CD4-positive, alpha-beta memory T cell (primary cell): ENCODE measurements at regions of chr12 and their contacts with region 1.

Region 1: GRCh38 chr12:122265931-122266771 is at the start of gene VPS33A:
- DNase-seq: peak; percentile 88 to 93 (median 91)
- H3K4me3 ChIP-seq: peak within 1 kb of the TSS; percentile 70 to 99
- H3K4me3 Mint-ChIP-seq: peak within 1 kb of the TSS; percentile 96 to 99 (median 98)
- H3K27ac ChIP-seq: peak within 1 kb of the TSS; percentile 81
- H3K27ac Mint-ChIP-seq: peak within 1 kb of the TSS; percentile 99 to 100 (median 99)
- H3K4me1 ChIP-seq: peaks cover 23% of the 10 kb centered on the region
- H3K4me1 Mint-ChIP-seq: peaks cover 14 to 39% (median 25%) of the 10 kb centered on the region in 4 donors
- H3K27me3 ChIP-seq: no peaks in the 10 kb centered on the region
- H3K27me3 Mint-ChIP-seq: peaks cover 0 to 4% of the 10 kb centered on the region in 2 donors
- total RNA-seq, gene VPS33A: 40.5 to 42.6 TPM

Region 2: GRCh38 chr12:122023339-122024091 is 242.6 kb before region 1 on chr12:
- CTCF ChIA-PET with region 1: no interaction called
- POLR2A ChIA-PET with region 1: no interaction called
- intact Hi-C with region 1: no loop called
- DNase-seq: no peak
- H3K4me3 ChIP-seq: peak overlapping the region in 1 of 2 donors; percentile 47
- H3K4me3 Mint-ChIP-seq: peak overlapping the region; percentile 74 to 84 (median 82)
- H3K27ac ChIP-seq: no peak overlapping the region
- H3K27ac Mint-ChIP-seq: peak overlapping the region in 3 of 7 donors; percentile 2 to 62 (median 13)
- H3K4me1 ChIP-seq: peaks cover 14% of the 10 kb centered on the region
- H3K4me1 Mint-ChIP-seq: peaks cover 5 to 14% (median 6%) of the 10 kb centered on the region in 4 donors
- H3K27me3 ChIP-seq: no peaks in the 10 kb centered on the region
- H3K27me3 Mint-ChIP-seq: peaks cover 5 to 7% of the 10 kb centered on the region in 2 donors

Region 3: GRCh38 chr12:122203301-122204166 is 62.6 kb before region 1 on chr12 and contains the start of gene B3GNT4:
- CTCF ChIA-PET with region 1: interaction called, 3 read pairs
- POLR2A ChIA-PET with region 1: no interaction called
- intact Hi-C with region 1: loop called (anchors 2 kb)
- DNase-seq: peak; percentile 68 to 74 (median 71)
- H3K4me3 ChIP-seq: peak within 1 kb of the TSS in 1 of 2 donors; percentile 55
- H3K4me3 Mint-ChIP-seq: peak within 1 kb of the TSS; percentile 80 to 94 (median 84)
- H3K27ac ChIP-seq: no peak within 1 kb of the TSS
- H3K27ac Mint-ChIP-seq: peak within 1 kb of the TSS in 5 of 7 donors; percentile 19 to 82 (median 24)
- H3K4me1 ChIP-seq: peaks cover 9% of the 10 kb centered on the region
- H3K4me1 Mint-ChIP-seq: peaks cover 5 to 20% (median 12%) of the 10 kb centered on the region in 4 donors
- H3K27me3 ChIP-seq: no peaks in the 10 kb centered on the region
- H3K27me3 Mint-ChIP-seq: peaks cover 0 to 8% of the 10 kb centered on the region in 2 donors
- total RNA-seq, gene B3GNT4: 0.93 to 1.4 TPM

Region 4: GRCh38 chr12:122399592-122400373 is 133.6 kb after region 1 on chr12:
- CTCF ChIA-PET with region 1: no interaction called
- POLR2A ChIA-PET with region 1: no interaction called
- intact Hi-C with region 1: no loop called
- DNase-seq: peak; percentile 66 to 68 (median 67)
- H3K4me3 ChIP-seq: no peak overlapping the region
- H3K4me3 Mint-ChIP-seq: peak overlapping the region; percentile 34 to 81 (median 72)
- H3K27ac ChIP-seq: peak overlapping the region; percentile 18
- H3K27ac Mint-ChIP-seq: peak overlapping the region; percentile 81 to 91 (median 89)
- H3K4me1 ChIP-seq: peaks cover 25% of the 10 kb centered on the region
- H3K4me1 Mint-ChIP-seq: peaks cover 29 to 42% (median 33%) of the 10 kb centered on the region in 4 donors
- H3K27me3 ChIP-seq: no peaks in the 10 kb centered on the region
- H3K27me3 Mint-ChIP-seq: no peaks in the 10 kb centered on the region